AG04450 (cell line): ENCODE measurements at regions of chr6 and their contacts with region 1.

Region 1: DNA sequence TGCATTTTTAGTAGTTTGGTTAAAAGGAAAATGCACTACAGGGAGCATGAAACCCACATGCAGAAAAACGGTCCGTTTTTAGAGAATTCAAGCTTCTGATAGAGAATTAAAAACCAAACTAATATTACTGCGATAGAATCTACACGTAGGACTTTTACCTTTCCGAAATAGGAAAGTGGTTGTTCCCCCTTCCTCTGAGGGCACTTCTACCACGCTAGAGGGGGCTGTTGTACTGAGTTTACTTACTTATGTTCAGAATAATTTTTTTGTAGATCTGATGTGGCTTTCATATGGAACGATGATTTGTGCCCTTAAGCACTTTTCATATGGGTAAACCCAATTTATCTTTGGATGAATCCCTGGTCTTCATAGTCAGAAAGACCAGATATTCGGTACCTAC is 264.3 kb upstream of the PLN start:
- DNase-seq: peak; percentile 43
- H3K4me3 ChIP-seq: no peak overlapping the region
- H3K27ac ChIP-seq: no peak overlapping the region
- H3K27me3 ChIP-seq: peaks cover 2% of the 10 kb centered on the region
- CTCF ChIP-seq: peak; percentile 87

Region 2: GRCh38 chr6:118228886-118229285 is 54.9 kb before region 1 on chr6:
- CTCF ChIA-PET with region 1: no interaction called
- POLR2A ChIA-PET with region 1: no interaction called
- DNase-seq: no peak
- H3K4me3 ChIP-seq: no peak overlapping the region
- H3K27ac ChIP-seq: no peak overlapping the region
- H3K27me3 ChIP-seq: no peaks in the 10 kb centered on the region
- CTCF ChIP-seq: no peak

Region 3: DNA sequence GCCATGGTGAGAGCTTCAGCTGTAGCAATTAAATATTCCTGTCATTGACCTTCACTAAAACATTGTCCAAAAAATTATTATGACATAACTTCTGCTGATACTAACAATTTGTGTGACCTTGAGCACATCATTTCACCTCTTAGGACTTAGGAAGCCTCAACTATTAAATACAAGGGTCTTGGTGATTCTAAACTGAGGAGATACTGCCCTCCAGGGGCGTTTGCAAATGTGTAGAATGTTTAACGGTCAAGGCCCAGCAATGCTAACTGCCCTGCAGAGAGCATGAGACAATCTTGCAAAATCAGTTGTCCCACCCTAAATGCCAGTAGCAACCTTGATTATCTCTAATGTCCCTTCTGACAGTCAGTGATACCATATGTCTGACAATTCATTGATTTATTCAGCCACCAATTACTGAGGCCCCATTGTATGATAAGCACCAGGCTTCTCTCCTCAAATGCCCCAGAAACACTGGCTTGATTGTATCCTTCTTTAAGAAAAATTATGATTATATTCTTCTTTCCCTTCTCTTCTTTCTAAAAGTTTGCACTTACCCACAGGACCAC is 19.8 kb before region 1 on chr6:
- CTCF ChIA-PET with region 1: interaction called, 10 read pairs
- POLR2A ChIA-PET with region 1: no interaction called
- DNase-seq: no peak
- H3K4me3 ChIP-seq: no peak overlapping the region
- H3K27ac ChIP-seq: no peak overlapping the region
- H3K27me3 ChIP-seq: no peaks in the 10 kb centered on the region
- CTCF ChIP-seq: peak; percentile 22; the same call in 1 of the 2 replicates

Region 4: DNA sequence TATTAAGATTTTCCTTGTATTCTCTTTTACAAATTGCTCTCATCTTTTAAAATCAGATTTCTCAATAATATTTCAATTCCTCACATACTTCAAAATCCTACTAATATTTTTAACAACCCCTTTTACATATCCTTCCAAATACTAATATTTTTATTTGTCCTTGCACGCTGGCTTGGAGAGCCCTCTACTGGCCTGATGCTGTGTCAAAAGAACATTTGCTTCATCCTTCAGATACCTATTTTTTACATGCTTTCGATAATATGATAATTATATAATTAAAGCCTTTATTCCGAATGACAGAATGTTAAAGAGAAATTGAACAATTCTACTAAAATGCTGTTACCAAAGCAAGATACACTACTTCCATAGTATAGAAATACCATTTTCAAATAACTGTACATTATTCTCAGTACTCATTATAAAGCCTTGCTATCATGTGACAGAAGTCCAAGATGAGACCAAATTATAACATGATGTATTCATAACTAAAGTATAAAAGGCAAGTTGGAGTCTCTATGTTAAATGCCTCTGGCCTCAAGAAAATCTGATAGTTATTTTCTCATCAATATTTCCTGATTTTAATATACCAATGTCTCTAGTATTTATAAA is 225.3 kb after region 1 on chr6:
- CTCF ChIA-PET with region 1: interaction called, 102 read pairs
- POLR2A ChIA-PET with region 1: no interaction called
- DNase-seq: peak; percentile 4
- H3K4me3 ChIP-seq: no peak overlapping the region
- H3K27ac ChIP-seq: no peak overlapping the region
- H3K27me3 ChIP-seq: no peaks in the 10 kb centered on the region
- CTCF ChIP-seq: peak; percentile 89

Region 5: DNA sequence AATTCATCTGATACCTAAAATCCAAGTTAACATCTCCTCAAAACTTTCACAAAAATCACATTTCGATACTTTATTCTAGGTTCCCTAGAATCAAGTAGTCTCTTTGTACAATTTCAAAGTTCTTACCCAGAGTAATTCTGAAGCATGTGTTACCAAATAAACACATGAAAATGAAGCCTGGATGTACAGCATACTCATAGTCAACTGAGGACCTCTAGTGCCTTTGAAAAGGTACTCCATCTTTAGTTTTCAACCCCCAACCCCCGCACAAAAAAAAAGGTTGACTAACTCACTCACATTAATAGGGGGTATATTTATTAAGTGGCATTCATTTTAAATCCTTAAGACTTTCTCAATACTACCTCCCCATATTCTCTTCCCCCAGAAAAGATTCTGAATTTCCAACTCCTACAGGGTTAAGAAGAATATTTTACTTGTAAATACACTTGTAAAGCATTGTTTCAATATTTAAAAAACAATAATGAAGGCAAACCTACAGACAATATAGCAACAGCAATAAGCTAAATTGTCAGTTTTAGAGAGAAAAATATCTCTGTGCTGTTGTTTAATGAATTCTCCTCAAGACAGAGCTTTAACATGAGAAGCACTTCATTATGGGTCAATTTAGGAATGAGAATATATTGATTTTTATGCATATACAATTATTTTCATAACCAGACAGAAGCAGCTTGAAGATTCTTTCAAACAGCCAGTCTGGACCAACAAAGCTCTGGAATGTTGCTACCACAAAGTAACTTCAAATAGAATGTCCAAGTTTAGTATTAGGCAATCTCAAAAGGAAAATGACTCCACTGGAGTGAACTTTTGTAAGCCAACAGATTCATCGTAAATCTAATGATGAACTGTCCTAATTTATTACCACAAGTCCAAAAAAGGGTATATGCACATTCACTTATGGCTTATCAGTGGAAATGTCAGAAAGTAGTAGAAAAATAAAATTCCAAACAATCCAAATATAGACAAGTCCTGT is 267.6 kb after region 1 on chr6:
- CTCF ChIA-PET with region 1: interaction called, 87 read pairs
- POLR2A ChIA-PET with region 1: no interaction called
- DNase-seq: peak; percentile 44
- H3K4me3 ChIP-seq: no peak overlapping the region
- H3K27ac ChIP-seq: no peak overlapping the region
- H3K27me3 ChIP-seq: no peaks in the 10 kb centered on the region
- CTCF ChIP-seq: peak; percentile 71

Region 6: DNA sequence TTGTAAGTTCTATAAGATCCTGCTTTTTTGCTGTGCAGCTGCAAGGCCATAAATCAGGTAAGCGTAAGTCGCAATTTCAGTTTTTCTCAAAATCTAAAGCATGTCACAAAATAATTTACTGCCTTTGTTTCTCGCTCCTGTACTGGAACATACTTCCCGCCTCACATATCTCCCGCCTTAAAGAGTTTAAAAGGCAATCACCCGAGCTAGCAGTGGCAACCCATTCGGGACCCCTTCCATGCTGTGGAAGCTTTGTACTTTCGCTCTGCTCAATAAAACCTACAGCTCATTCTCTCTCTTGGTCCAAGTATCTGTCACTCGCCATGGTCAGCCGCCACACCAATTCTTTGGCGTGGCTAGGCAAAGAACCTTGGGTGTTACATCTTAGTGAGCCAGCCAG is 333.7 kb after region 1 on chr6:
- CTCF ChIA-PET with region 1: interaction called, 40 read pairs
- POLR2A ChIA-PET with region 1: no interaction called
- DNase-seq: no peak
- H3K4me3 ChIP-seq: no peak overlapping the region
- H3K27ac ChIP-seq: no peak overlapping the region
- H3K27me3 ChIP-seq: no peaks in the 10 kb centered on the region
- CTCF ChIP-seq: no peak

Region 7: GRCh38 chr6:119110601-119111548 is 827.1 kb after region 1 on chr6:
- CTCF ChIA-PET with region 1: interaction called, 12 read pairs
- POLR2A ChIA-PET with region 1: no interaction called
- DNase-seq: no peak
- H3K4me3 ChIP-seq: no peak overlapping the region
- H3K27ac ChIP-seq: no peak overlapping the region
- H3K27me3 ChIP-seq: no peaks in the 10 kb centered on the region
- CTCF ChIP-seq: peak; percentile 58